ENCODE measurements at regions of chr6 and their contacts with region 1.

Region 1: DNA sequence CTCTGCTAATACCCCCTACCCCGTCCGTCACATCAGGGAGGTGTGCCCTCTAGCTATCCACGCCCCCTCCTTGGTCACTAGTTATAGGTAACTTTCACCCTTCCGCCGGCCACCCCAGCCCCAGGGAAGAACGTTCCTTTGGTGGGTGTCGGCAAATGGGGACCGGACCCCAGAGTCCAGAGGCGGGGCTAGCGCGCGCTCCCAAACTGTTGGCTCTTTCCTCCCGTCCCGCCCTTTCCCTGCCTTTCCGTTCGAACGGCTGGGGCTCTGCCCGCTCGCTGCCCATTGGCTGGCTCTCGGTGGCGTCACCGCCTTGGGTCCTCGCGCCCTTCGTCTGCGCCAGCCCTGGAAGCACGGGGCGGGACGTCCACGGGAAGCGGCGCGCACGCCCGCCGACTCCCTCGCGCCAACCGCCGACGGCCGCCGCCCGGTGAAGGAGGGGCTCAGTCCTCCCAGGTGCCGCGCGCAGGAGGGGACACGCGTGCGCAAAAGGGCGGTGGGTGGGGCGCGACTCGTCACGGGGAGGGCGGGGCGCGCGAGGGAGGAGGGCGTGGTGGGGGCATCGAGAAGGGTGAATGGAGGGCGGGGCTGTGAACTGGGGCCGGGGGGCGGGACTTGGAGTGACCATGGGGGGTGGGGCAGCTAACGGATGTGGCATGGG is 634 bp upstream of the PHF1 start:
- DNase-seq: peak; percentile 99
- H3K4me3 Mint-ChIP-seq: peak overlapping the region; percentile 91
- H3K27ac Mint-ChIP-seq: peak overlapping the region; percentile 96
- H3K4me1 Mint-ChIP-seq: peaks cover 50% of the 10 kb centered on the region
- H3K27me3 Mint-ChIP-seq: no peaks in the 10 kb centered on the region

Region 2: DNA sequence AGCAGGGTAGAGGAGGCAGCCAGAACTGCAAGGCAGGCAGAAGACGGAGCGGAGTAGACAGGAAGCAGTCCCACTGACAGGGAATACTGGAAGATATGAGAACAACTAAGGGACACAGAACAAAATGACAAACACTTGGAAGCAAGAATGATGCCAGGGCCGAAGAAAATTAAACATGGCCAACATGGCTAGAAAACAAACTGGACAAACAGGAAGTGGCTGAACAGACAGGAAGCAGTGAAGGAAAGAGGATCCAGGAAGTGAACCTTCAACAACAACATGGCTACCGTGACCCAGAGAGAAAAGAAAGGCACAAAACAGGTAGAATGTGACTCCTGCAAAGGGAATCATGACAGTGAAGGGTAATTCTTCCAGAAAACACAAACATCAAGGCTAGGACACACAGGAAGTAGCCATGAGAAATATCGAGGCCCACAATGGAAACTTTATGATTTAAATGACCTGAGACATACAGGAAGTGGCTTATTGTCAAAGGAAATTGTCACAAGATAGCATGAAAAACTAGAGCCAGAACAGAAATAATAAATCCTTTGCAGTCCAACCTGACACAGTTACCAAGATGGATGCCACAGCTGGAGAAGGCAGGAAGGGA is 227.0 kb before region 1 on chr6:
- intact Hi-C with region 1: no loop called
- DNase-seq: no peak
- H3K4me3 Mint-ChIP-seq: peak overlapping the region; percentile 21
- H3K27ac Mint-ChIP-seq: peak overlapping the region; percentile 87
- H3K4me1 Mint-ChIP-seq: peaks cover 32% of the 10 kb centered on the region
- H3K27me3 Mint-ChIP-seq: peaks cover 25% of the 10 kb centered on the region

Region 3: DNA sequence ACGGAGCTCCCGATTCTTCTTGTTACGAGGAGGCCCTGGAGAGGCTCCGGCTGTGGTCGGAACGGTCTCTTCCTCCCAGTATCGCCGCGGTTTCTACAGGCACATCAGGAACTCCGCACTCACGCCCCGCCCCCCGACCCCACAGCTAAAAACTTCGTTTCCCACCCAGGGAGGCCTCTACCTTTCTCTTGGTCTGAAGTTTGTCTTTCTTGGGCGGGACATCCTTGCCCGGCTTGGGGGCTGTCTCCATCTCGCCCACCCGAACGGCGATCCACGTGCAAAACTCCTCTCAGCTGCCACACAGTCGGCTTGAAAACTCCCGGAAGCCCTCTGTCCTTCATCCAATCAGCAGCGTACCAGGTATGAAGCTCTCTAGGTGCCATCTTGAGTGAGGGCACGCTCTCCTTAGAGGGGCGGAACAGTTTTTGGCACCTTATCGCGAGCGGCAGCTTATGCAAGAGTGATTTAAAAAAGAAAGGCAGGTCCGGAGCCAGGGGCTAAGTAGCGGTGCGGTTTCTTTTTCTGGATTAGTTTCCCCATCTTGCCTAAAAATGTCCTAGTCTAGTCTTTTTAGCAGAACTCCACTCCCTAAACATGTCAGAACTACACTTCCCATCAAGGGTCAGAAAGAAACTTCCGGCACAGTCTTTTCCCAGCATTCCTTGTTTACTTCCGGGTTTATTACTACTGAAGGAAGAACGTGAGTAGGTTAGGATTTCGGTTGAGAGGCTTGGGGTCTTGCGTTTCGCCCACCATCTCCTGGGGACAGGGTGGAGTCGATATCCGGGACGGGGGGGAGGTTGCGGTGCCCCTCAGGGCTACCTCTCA is 121.0 kb before region 1 on chr6 and contains the starts of genes PFDN6 and WDR46:
- intact Hi-C with region 1: loop called (anchors 1 kb)
- DNase-seq: peak; percentile 83
- H3K4me3 Mint-ChIP-seq: peak within 1 kb of the TSS; percentile 98
- H3K27ac Mint-ChIP-seq: peak within 1 kb of the TSS; percentile 86
- H3K4me1 Mint-ChIP-seq: peaks cover 31% of the 10 kb centered on the region
- H3K27me3 Mint-ChIP-seq: no peaks in the 10 kb centered on the region
- total RNA-seq, gene PFDN6: 122 and 126 TPM in 2 replicates
- total RNA-seq, gene WDR46: 113 and 123 TPM in 2 replicates

Region 4: DNA sequence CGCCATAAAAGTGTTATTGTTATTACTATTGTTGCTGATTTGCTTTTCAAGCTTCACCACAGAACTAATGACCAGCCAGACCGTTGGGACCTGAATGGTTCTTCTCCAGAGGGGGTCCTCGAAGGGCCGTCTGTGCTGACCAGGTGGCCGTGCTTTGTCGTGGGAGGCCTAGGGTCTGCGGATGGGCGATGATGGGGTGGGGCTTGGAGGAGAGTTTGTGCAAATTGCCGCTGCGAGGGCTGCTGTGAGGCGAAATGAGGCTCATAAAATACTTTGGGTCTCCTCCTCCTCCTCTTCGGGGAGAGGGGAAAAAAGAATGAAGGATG is 86.6 kb before region 1 on chr6:
- intact Hi-C with region 1: loop called (anchors 1 kb)
- DNase-seq: no peak
- H3K4me3 Mint-ChIP-seq: peak overlapping the region; percentile 97
- H3K27ac Mint-ChIP-seq: peak overlapping the region; percentile 98
- H3K4me1 Mint-ChIP-seq: peaks cover 55% of the 10 kb centered on the region
- H3K27me3 Mint-ChIP-seq: no peaks in the 10 kb centered on the region

Region 5: DNA sequence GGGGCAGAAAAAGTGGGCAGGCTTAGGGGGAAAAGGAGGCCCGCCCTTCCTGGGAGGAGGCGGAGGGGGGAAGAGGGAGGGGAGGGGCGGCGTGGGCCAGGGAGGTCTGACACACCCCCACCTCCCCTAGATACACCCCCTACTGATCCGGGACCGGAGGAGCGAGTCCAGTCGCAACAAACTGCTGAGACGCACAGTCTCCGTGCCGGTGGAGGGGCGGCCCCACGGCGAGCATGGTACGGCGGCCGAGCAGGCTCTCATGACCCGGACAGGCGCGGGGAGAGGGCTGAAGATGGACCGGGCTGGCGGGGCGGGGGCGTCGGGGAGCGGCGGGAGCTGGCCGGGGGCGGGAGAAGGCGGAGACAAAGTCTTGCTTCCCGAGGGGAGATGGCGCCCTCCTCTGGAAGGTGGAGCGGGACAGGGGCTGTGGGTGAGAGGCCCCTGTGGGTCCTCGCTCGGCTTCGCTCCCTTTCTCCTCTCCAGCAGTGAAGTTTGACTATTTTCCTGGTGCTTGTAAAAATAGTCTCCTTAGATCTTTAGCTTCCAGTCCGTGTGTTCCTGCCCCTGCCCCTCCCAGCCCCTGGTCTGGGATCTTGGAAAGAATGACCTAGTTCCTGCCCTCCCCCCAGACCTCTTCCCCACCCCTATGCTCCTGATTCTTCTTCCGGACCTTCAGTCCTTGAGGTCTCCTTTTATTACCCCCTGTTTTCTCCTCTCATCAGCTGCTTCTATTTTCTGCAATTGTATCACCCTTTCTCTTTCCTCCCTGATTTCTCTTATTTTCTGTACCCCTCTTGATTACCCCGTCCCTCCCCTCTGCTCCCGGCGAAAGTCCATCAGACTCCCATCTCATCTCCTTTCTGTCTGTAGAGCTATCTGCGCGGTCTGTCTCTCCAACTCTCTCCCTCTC is 15.7 kb after region 1 on chr6:
- intact Hi-C with region 1: loop called (anchors 2 kb)
- DNase-seq: peak; percentile 72
- H3K4me3 Mint-ChIP-seq: peak overlapping the region; percentile 89
- H3K27ac Mint-ChIP-seq: peak overlapping the region; percentile 92
- H3K4me1 Mint-ChIP-seq: peaks cover 77% of the 10 kb centered on the region
- H3K27me3 Mint-ChIP-seq: no peaks in the 10 kb centered on the region